MCF 10A (cell line): ENCODE measurements at regions of chr9 and their contacts with region 1.

Region 1: GRCh38 chr9:128829477-128830251 is at the start of gene SPOUT1:
- DNase-seq: peak; percentile 95
- H3K4me3 Mint-ChIP-seq: peak within 1 kb of the TSS; percentile 97
- H3K27ac Mint-ChIP-seq: peak within 1 kb of the TSS; percentile 94
- H3K4me1 Mint-ChIP-seq: peaks cover 15% of the 10 kb centered on the region
- H3K27me3 Mint-ChIP-seq: no peaks in the 10 kb centered on the region
- CTCF ChIP-seq: no peak
- total RNA-seq, gene SPOUT1: 30.1 and 32.4 TPM in 2 replicates

Region 2: GRCh38 chr9:128845155-128845931 is 15.7 kb after region 1 on chr9:
- CTCF ChIA-PET with region 1: interaction called, 4 read pairs
- POLR2A ChIA-PET with region 1: interaction called, 10 read pairs
- intact Hi-C with region 1: no loop called
- DNase-seq: peak; percentile 55
- H3K4me3 Mint-ChIP-seq: no peak overlapping the region
- H3K27ac Mint-ChIP-seq: no peak overlapping the region
- H3K4me1 Mint-ChIP-seq: peaks cover 9% of the 10 kb centered on the region
- H3K27me3 Mint-ChIP-seq: no peaks in the 10 kb centered on the region
- CTCF ChIP-seq: no peak

Region 3: GRCh38 chr9:128906741-128907140 is 77.1 kb after region 1 on chr9:
- CTCF ChIA-PET with region 1: no interaction called
- POLR2A ChIA-PET with region 1: no interaction called
- intact Hi-C with region 1: no loop called
- DNase-seq: no peak
- H3K4me3 Mint-ChIP-seq: no peak overlapping the region
- H3K27ac Mint-ChIP-seq: peak overlapping the region; percentile 50
- H3K4me1 Mint-ChIP-seq: peaks cover 24% of the 10 kb centered on the region
- H3K27me3 Mint-ChIP-seq: no peaks in the 10 kb centered on the region
- CTCF ChIP-seq: no peak